ENCODE measurements at regions of chr1 and their contacts with region 1.

Region 1: DNA sequence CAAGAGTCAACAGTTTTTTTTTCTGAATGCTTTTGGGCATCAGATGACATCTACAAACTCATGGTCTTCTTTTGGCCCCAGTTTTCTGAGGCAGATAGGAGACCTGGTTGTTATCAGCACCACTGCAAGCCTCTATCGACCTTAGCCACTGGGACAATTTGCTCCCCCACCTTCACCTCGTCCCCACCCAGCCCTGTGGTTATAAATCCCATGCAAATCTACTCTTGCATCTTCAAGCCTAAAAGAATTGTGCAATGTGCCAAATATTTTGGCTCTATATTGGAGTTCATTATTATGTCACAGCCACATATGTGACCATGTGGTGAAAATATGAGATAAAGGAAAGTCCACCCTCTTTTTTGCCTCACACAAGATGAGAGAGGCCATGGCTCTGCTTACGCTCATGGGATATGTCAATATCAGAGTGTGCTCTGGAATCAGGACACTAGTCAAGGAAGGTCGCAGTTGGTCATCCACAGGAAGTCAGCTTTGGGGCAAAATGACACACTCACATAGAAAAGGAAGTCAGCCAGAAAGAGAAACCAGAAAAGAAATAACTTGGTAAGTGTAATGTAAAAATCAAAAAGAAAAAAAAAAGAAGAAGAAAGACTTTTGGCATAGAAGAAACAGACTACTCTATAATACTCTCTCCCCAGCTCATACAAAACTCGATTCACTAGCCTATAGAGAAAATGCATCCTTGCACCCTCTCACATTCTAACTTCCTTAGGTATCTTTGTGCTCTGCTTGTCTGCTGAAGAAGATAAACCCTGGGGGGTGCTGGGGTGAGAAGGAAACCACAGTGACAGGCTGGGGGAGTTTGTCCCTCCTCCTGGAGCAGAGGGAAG is 21.2 kb downstream of the SLC30A10 start:
- DNase-seq: peak; percentile 87 to 99 (median 91)
- ATAC-seq: peak; percentile 82
- H3K4me3 ChIP-seq: peak overlapping the region; percentile 3; the same call in 1 of the 2 replicates
- H3K27ac ChIP-seq: peak overlapping the region; percentile 79
- H3K4me1 ChIP-seq: peaks cover 43 to 80% of the 10 kb centered on the region in 2 experiments
- H3K27me3 ChIP-seq: no peaks in the 10 kb centered on the region
- CTCF ChIP-seq: no peak
- EP300 ChIP-seq: peak; percentile 98
- POLR2A ChIP-seq: peak; percentile 41; the same call in 1 of the 2 replicates
- RAD21 ChIP-seq: peak; percentile 17 to 26; a peak in 2 of 4 replicates

Region 2: DNA sequence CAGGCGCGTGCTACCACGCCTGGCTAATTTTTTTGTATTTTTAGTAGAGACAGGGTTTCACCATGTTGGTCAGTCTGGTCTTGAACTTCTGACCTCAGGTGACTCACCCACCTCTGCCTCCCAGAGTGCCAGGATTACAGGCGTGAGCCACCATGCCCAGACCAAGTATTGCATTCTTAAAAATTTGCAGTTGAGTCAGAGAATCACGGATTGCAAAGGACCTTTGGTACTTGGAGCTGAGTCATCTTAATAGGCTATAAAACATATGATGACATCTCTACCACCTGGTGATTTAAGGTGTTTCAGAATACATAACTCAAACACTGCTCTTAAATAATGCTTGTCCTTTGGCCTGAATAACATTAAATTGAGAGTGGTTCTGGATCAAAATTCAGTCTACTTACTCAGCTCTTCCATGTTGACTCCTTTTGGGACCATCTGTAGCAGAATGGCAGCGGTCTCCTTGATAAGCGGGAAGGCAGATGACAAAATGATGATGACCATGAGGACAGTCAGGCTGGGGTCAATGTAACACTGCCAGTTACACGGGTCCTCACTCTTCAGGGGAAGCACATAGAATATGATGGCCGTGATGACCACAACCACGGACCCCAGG is 10.8 kb after region 1 on chr1:
- CTCF ChIA-PET with region 1: no interaction called
- POLR2A ChIA-PET with region 1: interaction called, 17 read pairs
- in situ Hi-C with region 1: no loop called
- intact Hi-C with region 1: no loop called
- DNase-seq: no peak
- ATAC-seq: no peak
- H3K4me3 ChIP-seq: no peak overlapping the region
- H3K27ac ChIP-seq: no peak overlapping the region
- H3K4me1 ChIP-seq: peaks cover 0 to 3% of the 10 kb centered on the region in 2 experiments; a peak in 3 of 5 replicates
- H3K27me3 ChIP-seq: no peaks in the 10 kb centered on the region
- CTCF ChIP-seq: no peak
- EP300 ChIP-seq: no peak
- POLR2A ChIP-seq: no peak
- RAD21 ChIP-seq: no peak

Region 3: GRCh38 chr1:219927956-219928790 is 21.0 kb after region 1 on chr1 and contains the start of gene SLC30A10:
- CTCF ChIA-PET with region 1: no interaction called
- POLR2A ChIA-PET with region 1: interaction called, 8 read pairs
- in situ Hi-C with region 1: no loop called
- intact Hi-C with region 1: loop called (anchors 2 kb)
- DNase-seq: peak; percentile 82 to 90 (median 87)
- ATAC-seq: peak; percentile 88
- H3K4me3 ChIP-seq: peak within 1 kb of the TSS; percentile 66
- H3K27ac ChIP-seq: peak within 1 kb of the TSS; percentile 57
- H3K4me1 ChIP-seq: peaks cover 25 to 26% of the 10 kb centered on the region in 2 experiments; a peak in 4 of 5 replicates
- H3K27me3 ChIP-seq: no peaks in the 10 kb centered on the region
- CTCF ChIP-seq: peak; percentile 36 to 37 (median 36); a peak in 4 of 6 replicates
- EP300 ChIP-seq: no peak
- POLR2A ChIP-seq: peak; percentile 54; the same call in 1 of the 2 replicates
- RAD21 ChIP-seq: peak in 1 of 2 experiments; percentile 38; a peak in 2 of 4 replicates
- polyA plus RNA-seq, gene SLC30A10: 2.6 to 3.8 TPM

Region 4: DNA sequence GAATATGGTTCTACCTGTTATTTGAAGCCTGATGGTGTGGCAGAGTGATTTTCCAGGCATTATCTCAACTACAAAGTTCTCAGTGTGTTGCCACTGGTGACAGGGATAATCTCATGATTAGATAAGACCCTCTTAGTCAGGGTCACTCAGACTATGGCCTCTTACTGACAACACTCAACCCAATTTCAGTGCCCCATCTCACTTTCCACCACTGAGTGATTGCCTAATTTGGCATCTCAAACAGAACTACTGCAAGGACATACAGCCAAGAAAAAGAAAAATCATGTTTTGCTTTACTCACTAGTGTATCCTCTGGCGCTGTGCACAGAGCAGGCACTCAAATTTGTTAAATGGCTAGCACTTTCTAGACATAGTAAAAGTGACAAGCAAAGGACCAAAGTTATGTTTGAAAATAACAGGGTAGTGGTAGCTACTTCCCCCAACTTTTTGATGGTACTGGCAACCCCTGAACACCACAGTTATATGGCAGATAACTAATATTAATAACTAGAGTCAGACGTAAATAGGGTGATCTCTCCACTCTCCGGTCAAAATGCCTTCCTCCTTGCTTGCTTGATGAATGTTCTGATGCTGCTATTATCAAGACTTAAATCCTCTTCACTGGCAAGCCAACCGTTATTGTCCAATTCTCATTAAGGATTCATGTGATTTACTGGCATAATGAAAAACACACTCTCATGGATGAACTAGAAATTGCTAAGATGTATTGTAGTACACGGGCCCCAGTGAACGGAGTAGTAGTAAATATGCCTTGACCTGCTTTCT is 58.3 kb after region 1 on chr1:
- CTCF ChIA-PET with region 1: no interaction called
- POLR2A ChIA-PET with region 1: no interaction called
- in situ Hi-C with region 1: no loop called
- intact Hi-C with region 1: loop called (anchors 2 kb)
- DNase-seq: peak in 2 of 4 experiments; percentile 30 to 54
- ATAC-seq: peak; percentile 63
- H3K4me3 ChIP-seq: no peak overlapping the region
- H3K27ac ChIP-seq: no peak overlapping the region
- H3K4me1 ChIP-seq: peaks cover 0 to 21% of the 10 kb centered on the region in 2 experiments; a peak in 3 of 5 replicates
- H3K27me3 ChIP-seq: no peaks in the 10 kb centered on the region
- CTCF ChIP-seq: no peak
- EP300 ChIP-seq: no peak
- POLR2A ChIP-seq: no peak
- RAD21 ChIP-seq: no peak

Region 5: DNA sequence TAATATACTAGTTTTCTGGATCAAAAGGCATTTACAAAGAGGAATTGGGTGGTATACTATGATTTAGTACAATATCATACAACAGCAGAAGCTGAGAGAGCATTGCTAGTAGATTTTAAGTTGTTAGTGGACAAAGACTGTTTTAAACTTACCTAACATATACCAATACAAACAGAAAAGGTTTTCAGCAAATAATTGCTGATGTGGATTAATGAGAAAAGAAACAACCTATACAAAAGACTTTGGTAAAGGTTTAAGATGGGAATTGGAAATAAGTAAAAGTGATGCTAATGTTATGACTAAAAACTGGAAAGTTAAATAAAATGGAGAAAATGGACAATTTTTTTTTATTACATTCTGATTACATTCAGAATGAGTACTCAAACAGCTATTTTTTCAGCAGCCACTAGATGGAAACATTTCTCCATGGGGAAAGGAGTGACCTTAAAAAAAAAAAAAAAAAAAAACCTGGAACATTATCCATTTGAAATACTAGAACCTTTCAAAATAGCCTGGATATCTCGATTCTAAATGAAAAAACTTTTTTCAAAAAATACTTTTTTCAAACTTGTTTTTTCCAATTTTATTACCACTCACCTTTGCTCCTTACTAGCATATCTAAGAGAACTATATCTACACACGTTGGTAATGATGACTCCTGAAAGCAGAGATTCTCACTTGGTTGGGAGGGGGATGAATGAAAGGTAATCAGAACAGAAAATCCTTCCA is 83.8 kb after region 1 on chr1:
- CTCF ChIA-PET with region 1: no interaction called
- POLR2A ChIA-PET with region 1: no interaction called
- in situ Hi-C with region 1: no loop called
- intact Hi-C with region 1: loop called (anchors 1 kb)
- DNase-seq: peak in 3 of 4 experiments; percentile 26 to 56 (median 28)
- ATAC-seq: peak; percentile 52
- H3K4me3 ChIP-seq: no peak overlapping the region
- H3K27ac ChIP-seq: no peak overlapping the region
- H3K4me1 ChIP-seq: no peaks in the 10 kb centered on the region; a peak in 1 of 5 replicates
- H3K27me3 ChIP-seq: no peaks in the 10 kb centered on the region
- CTCF ChIP-seq: peak in 2 of 3 experiments; percentile 28 to 76; a peak in 3 of 6 replicates
- EP300 ChIP-seq: no peak
- POLR2A ChIP-seq: no peak
- RAD21 ChIP-seq: peak; percentile 39 to 48; a peak in 3 of 4 replicates

Region 6: DNA sequence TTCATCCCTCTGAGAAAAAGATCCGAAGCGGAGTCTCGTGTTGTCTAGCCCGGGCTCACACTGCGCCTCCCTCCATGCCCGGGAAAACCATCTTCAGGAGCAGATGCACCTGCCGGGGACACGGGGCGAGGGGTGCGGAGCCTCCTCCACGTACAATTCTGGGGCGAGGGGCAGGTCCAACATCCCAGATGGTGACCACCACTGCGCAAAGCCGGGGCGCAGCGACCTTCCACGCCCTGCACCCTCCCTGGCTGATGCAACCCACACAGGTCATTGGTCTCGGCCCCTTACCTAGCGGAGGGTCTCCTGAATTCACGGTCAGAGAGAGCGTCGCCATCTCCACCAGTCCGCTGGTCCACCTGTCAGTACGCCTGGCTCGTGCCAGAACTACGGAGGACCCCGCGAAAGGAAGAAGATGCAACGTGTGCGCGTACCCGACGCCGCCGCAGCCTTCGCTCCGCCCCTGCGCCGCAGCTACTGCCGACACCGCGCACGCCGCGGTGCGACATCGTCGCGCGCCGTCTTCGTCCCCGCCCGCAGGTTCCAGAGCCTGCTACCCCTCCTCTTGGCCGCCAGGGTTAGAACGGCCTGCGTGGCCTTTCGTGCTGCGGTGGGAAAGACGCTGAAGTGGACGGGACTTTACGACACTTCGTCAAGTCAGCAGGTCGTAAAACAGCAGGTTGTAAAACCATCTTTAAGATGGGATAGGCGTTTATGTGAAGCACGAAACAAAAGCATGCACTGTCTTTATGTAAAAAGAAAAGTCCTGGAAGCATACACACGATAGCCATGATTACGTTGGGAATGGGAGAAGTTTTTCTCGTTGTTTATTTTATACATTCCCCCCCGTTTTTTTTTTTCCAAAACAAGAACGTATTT is 139.1 kb after region 1 on chr1 and contains the start of gene EPRS1:
- CTCF ChIA-PET with region 1: no interaction called
- POLR2A ChIA-PET with region 1: no interaction called
- in situ Hi-C with region 1: no loop called
- intact Hi-C with region 1: loop called (anchors 2 kb)
- DNase-seq: peak; percentile 95 to 100 (median 97)
- ATAC-seq: peak; percentile 96
- H3K4me3 ChIP-seq: peak within 1 kb of the TSS; percentile 88
- H3K27ac ChIP-seq: peak within 1 kb of the TSS; percentile 91
- H3K4me1 ChIP-seq: peaks cover 15 to 19% of the 10 kb centered on the region in 2 experiments; a peak in 4 of 5 replicates
- H3K27me3 ChIP-seq: no peaks in the 10 kb centered on the region
- CTCF ChIP-seq: peak; percentile 91 to 94 (median 91)
- EP300 ChIP-seq: peak; percentile 69
- POLR2A ChIP-seq: peak; percentile 89
- RAD21 ChIP-seq: peak in 1 of 2 experiments; percentile 34; a peak in 2 of 4 replicates
- polyA plus RNA-seq, gene EPRS1: 193 to 291 TPM

Region 7: DNA sequence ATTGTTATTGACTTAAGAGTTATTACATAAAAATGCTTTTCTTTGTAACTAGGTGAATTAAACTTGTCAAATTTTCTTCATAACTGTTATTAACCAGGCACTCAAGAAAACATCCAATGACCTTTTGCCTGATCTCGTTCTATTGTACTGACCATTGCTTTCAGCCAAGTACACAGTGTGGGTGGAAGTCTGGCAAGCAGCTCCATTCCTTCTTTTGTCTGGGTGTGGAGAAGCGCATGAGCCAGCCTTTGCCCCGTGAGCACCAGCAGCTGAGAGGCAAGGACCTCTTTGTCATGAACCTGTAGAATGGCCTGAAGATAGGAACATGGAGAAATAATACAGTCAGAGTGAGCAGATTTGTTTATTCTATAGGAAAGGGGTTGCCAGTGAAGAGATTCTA is 244.3 kb after region 1 on chr1:
- CTCF ChIA-PET with region 1: no interaction called
- POLR2A ChIA-PET with region 1: no interaction called
- in situ Hi-C with region 1: no loop called
- intact Hi-C with region 1: no loop called
- DNase-seq: no peak
- ATAC-seq: no peak
- H3K4me3 ChIP-seq: no peak overlapping the region
- H3K27ac ChIP-seq: no peak overlapping the region
- H3K4me1 ChIP-seq: no peaks in the 10 kb centered on the region
- H3K27me3 ChIP-seq: no peaks in the 10 kb centered on the region
- CTCF ChIP-seq: no peak
- EP300 ChIP-seq: no peak
- POLR2A ChIP-seq: no peak
- RAD21 ChIP-seq: no peak

Region 8: GRCh38 chr1:221308534-221309511 is 1401.7 kb after region 1 on chr1:
- CTCF ChIA-PET with region 1: no interaction called
- POLR2A ChIA-PET with region 1: no interaction called
- in situ Hi-C with region 1: no loop called
- intact Hi-C with region 1: no loop called
- DNase-seq: no peak
- ATAC-seq: no peak
- H3K4me3 ChIP-seq: no peak overlapping the region
- H3K27ac ChIP-seq: no peak overlapping the region
- H3K4me1 ChIP-seq: no peaks in the 10 kb centered on the region
- H3K27me3 ChIP-seq: no peaks in the 10 kb centered on the region
- CTCF ChIP-seq: no peak
- EP300 ChIP-seq: no peak
- POLR2A ChIP-seq: no peak
- RAD21 ChIP-seq: no peak